ENCODE measurements at regions of chr4 and their contacts with region 1.

Region 1: GRCh38 chr4:78056265-78057129 is 626 bp upstream of the FRAS1 start:
- DNase-seq: peak; percentile 83
- H3K4me3 ChIP-seq: peak overlapping the region; percentile 73 to 81 (median 76)
- H3K27ac ChIP-seq: peak overlapping the region; percentile 34
- H3K4me1 ChIP-seq: peaks cover 6% of the 10 kb centered on the region
- H3K27me3 ChIP-seq: no peaks in the 10 kb centered on the region
- CTCF ChIP-seq: peak in 1 of 2 donors; percentile 8

Region 2: GRCh38 chr4:77819843-77820648 is 236.5 kb before region 1 on chr4:
- CTCF ChIA-PET with region 1: no interaction called
- dilution Hi-C with region 1: no loop called
- in situ Hi-C with region 1: no loop called
- intact Hi-C with region 1: loop called (anchors 2 kb)
- DNase-seq: peak; percentile 86
- H3K4me3 ChIP-seq: peak overlapping the region; percentile 72 to 90 (median 83)
- H3K27ac ChIP-seq: peak overlapping the region; percentile 93
- H3K4me1 ChIP-seq: peaks cover 15% of the 10 kb centered on the region
- H3K27me3 ChIP-seq: no peaks in the 10 kb centered on the region
- CTCF ChIP-seq: no peak

Region 3: GRCh38 chr4:77994194-77994721 is 62.2 kb before region 1 on chr4:
- CTCF ChIA-PET with region 1: interaction called, 3 read pairs
- dilution Hi-C with region 1: no loop called
- in situ Hi-C with region 1: no loop called
- intact Hi-C with region 1: loop called (anchors 1 kb)
- DNase-seq: peak; percentile 47
- H3K4me3 ChIP-seq: no peak overlapping the region
- H3K27ac ChIP-seq: no peak overlapping the region
- H3K4me1 ChIP-seq: no peaks in the 10 kb centered on the region
- H3K27me3 ChIP-seq: no peaks in the 10 kb centered on the region
- CTCF ChIP-seq: peak; percentile 68 to 73

Region 4: GRCh38 chr4:78014889-78015885 is 41.3 kb before region 1 on chr4:
- CTCF ChIA-PET with region 1: no interaction called
- dilution Hi-C with region 1: no loop called
- in situ Hi-C with region 1: no loop called
- intact Hi-C with region 1: no loop called
- DNase-seq: no peak
- H3K4me3 ChIP-seq: no peak overlapping the region
- H3K27ac ChIP-seq: no peak overlapping the region
- H3K4me1 ChIP-seq: no peaks in the 10 kb centered on the region
- H3K27me3 ChIP-seq: no peaks in the 10 kb centered on the region
- CTCF ChIP-seq: no peak

Region 5: DNA sequence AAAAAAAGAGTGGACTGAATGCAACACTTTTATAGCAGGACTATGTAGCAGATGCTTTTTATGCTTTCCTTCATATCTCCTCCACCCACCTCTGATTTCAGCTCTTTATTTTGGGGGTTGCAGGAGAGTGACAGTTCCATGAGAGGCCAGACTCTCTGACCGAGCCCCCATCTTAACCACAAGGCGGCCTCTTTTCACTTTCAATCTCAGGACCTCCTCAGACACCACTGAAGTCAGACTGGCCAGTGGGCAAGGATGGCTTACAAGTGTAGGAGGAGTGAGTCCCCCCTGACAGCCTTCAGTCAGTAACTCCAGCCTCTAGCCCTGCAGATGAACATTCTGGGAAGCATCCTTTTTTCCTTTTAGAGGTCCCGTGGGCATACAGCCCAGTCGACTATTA is 141.4 kb after region 1 on chr4:
- CTCF ChIA-PET with region 1: no interaction called
- dilution Hi-C with region 1: no loop called
- in situ Hi-C with region 1: no loop called
- intact Hi-C with region 1: no loop called
- DNase-seq: no peak
- H3K4me3 ChIP-seq: no peak overlapping the region
- H3K27ac ChIP-seq: no peak overlapping the region
- H3K4me1 ChIP-seq: no peaks in the 10 kb centered on the region
- H3K27me3 ChIP-seq: no peaks in the 10 kb centered on the region
- CTCF ChIP-seq: no peak

Region 6: DNA sequence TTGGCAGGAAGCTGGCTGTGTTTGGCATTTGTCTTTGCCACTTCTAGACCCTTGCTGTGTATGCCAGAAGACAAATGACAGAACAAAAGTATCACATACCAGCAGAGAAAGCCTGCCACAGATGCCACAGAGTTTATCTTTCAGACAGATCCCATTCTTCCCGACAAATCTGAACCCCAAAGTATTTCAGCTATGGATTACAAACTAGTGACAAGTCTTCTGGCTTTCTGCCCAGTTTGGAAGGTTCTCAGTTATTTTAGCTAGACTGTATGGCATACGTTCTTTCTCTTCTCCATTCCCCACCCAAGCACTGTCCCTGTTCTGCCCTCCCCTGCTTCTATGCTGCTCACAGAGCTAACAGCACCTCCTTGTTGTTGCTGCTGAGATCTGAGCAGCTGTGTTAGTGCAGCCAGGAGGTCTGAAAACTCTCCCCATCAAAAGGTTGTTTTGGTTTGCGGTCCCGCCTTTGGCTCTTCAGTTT is 237.4 kb after region 1 on chr4:
- CTCF ChIA-PET with region 1: no interaction called
- dilution Hi-C with region 1: no loop called
- in situ Hi-C with region 1: no loop called
- intact Hi-C with region 1: loop called (anchors 10 kb)
- DNase-seq: peak; percentile 65
- H3K4me3 ChIP-seq: no peak overlapping the region
- H3K27ac ChIP-seq: no peak overlapping the region
- H3K4me1 ChIP-seq: peaks cover 21% of the 10 kb centered on the region
- H3K27me3 ChIP-seq: no peaks in the 10 kb centered on the region
- CTCF ChIP-seq: no peak

Region 7: GRCh38 chr4:78517050-78517652 is 460.7 kb after region 1 on chr4:
- CTCF ChIA-PET with region 1: no interaction called
- dilution Hi-C with region 1: loop called (anchors 25 kb)
- in situ Hi-C with region 1: loop called (anchors 25 kb)
- intact Hi-C with region 1: loop called (anchors 1 kb)
- DNase-seq: peak; percentile 17
- H3K4me3 ChIP-seq: no peak overlapping the region
- H3K27ac ChIP-seq: no peak overlapping the region
- H3K4me1 ChIP-seq: no peaks in the 10 kb centered on the region
- H3K27me3 ChIP-seq: no peaks in the 10 kb centered on the region
- CTCF ChIP-seq: peak; percentile 65 to 70

Region 8: DNA sequence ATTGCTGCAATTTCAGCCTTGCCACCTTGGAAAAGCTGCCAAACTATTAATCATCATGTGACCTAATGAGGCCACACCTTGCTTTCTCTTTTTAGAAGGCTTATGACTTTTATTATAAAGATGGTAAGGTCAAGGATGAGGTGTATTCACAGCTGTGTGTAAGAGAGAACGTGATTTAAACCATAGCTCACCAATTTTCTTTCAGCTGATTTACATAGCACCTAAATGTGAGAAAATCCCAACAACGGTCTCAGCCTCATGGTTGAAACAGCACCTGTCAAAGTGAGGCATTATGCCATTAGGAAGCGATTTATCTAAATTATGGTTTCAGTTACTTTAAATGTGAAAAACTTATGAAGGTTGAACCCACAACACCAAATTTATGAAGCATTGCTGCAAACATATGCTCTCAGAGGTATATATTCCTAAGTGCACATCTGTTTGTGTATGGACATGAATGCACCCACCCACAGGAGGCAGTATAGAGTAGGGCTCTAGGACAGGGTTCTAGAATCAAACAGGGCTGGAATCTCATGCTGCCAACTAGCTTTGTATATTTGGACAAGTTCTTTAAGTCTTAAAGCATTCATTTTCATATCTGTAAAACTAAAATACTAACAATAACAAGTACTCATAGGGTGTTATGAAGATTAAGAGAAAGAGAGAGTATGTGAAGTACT is 535.7 kb after region 1 on chr4:
- CTCF ChIA-PET with region 1: no interaction called
- dilution Hi-C with region 1: no loop called
- in situ Hi-C with region 1: no loop called
- intact Hi-C with region 1: loop called (anchors 2 kb)
- DNase-seq: peak; percentile 31
- H3K4me3 ChIP-seq: no peak overlapping the region
- H3K27ac ChIP-seq: no peak overlapping the region
- H3K4me1 ChIP-seq: no peaks in the 10 kb centered on the region
- H3K27me3 ChIP-seq: no peaks in the 10 kb centered on the region
- CTCF ChIP-seq: peak; percentile 42 to 48